HEK293 (cell line): ENCODE measurements at regions of chr5 and their contacts with region 1.

Region 1: DNA sequence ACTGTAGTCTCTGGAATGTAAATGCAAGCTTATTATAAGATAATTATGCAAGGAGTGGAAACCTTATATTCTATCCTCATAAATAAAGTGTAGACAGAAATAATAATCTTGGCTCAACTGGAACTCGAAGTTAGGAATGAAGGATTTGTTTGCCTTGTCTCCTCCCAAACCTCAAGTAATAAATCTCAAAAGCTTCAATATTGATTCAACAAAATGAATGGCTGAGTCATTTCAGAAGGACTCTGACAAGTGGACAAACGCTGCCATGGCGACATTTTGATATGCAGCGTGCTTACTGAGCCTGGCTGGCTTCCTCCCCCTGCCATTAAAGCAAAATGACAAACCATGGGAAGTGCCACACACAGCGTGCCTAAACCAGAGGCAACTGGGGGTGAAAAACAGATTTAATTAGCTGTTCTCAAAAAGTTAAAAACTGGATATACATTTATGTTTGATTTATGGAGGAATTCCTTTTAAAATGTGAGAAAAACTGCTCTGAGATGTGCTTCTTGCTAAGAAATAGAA is 10.5 kb upstream of the ADGRV1 start:
- H3K4me3 ChIP-seq: peak overlapping the region; percentile 11
- H3K27ac ChIP-seq: peak overlapping the region; percentile 92; the same call in 1 of the 2 replicates
- H3K4me1 ChIP-seq: peaks cover 13% of the 10 kb centered on the region
- CTCF ChIP-seq: no peak

Region 2: DNA sequence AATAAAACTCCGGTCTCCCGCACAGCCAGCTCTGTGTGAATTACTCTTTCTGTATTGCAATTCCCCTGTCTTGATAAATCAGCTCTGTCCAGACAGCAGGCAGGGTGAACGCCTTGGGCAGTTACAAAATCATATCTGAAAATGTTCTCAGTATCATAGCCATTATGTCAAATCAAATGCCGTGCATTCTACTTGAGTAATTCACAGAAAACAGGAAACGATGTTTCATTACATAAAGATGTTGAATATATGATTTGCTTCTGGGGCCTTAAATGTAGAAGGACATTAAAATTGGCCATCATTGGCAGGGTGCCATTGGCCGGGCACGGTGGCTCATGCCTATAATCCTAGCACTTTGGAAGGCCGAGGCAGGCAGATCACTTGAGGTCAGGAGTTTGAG is 64.9 kb before region 1 on chr5:
- CTCF ChIA-PET with region 1: no interaction called
- POLR2A ChIA-PET with region 1: no interaction called
- H3K4me3 ChIP-seq: no peak overlapping the region
- H3K27ac ChIP-seq: no peak overlapping the region
- H3K4me1 ChIP-seq: no peaks in the 10 kb centered on the region
- CTCF ChIP-seq: no peak

Region 3: GRCh38 chr5:90558344-90559192 is 10.4 kb after region 1 on chr5 and contains the start of gene ADGRV1:
- CTCF ChIA-PET with region 1: interaction called, 5 read pairs
- POLR2A ChIA-PET with region 1: interaction called, 27 read pairs
- H3K4me3 ChIP-seq: peak within 1 kb of the TSS; percentile 98
- H3K27ac ChIP-seq: peak within 1 kb of the TSS; percentile 92
- H3K4me1 ChIP-seq: peaks cover 36% of the 10 kb centered on the region
- CTCF ChIP-seq: 0 out of 2 replicates have a peak, but pooled peaks have one; percentile 34

Region 4: DNA sequence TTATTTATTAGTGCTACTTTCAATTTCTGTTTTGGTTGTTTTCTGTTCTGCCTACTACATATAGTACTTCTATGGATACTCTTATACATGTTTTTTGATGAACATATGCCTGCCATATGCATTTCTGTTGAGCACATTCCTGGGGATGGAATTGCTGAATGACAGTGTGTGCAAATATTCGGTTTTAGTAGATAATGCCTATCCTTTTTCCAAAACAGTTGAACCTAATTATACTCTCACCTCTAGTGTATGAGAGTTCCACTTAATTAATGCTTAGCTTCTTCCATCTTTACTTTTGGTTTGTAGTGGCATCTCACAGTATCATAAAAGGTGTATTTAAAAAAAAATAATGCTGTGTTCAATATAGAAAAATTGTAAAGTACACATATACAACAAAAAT is 107.3 kb after region 1 on chr5:
- CTCF ChIA-PET with region 1: no interaction called
- POLR2A ChIA-PET with region 1: no interaction called
- H3K4me3 ChIP-seq: no peak overlapping the region
- H3K27ac ChIP-seq: no peak overlapping the region
- H3K4me1 ChIP-seq: no peaks in the 10 kb centered on the region
- CTCF ChIP-seq: no peak

Region 5: GRCh38 chr5:91288118-91288916 is 740.2 kb after region 1 on chr5:
- CTCF ChIA-PET with region 1: no interaction called
- POLR2A ChIA-PET with region 1: no interaction called
- H3K4me3 ChIP-seq: no peak overlapping the region
- H3K27ac ChIP-seq: no peak overlapping the region
- H3K4me1 ChIP-seq: no peaks in the 10 kb centered on the region
- CTCF ChIP-seq: no peak